ENCODE measurements at regions of chrX and their contacts with region 1.

Region 1: DNA sequence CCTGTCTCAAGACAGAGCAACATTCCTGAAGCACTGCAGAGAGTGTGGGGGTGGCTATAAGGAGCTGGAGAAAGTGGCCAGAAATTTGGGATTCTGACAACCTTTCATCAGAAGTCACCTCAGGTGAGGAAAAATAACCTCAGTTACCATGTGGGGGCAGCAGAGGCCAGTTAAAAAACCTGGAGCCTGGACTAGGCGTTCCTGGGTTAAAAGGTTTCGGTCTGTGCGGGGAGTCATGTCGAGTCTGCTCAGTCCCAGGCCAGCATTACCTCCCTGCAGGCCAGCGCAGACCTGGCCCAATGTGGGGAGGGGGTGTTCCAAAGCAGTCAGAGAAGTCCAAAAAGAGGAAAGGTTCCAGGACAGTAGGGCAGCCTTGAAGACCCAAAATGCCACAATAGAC is 10.9 kb upstream of the NALF2 start:
- DNase-seq: peak; percentile 71
- H3K4me3 Mint-ChIP-seq: no peak overlapping the region
- H3K27ac Mint-ChIP-seq: no peak overlapping the region
- H3K4me1 Mint-ChIP-seq: peaks cover 7% of the 10 kb centered on the region
- H3K27me3 Mint-ChIP-seq: peaks cover 66% of the 10 kb centered on the region
- CTCF ChIP-seq: peak; percentile 69

Region 2: GRCh38 chrX:69538321-69538876 is 45.2 kb after region 1 on chrX:
- CTCF ChIA-PET with region 1: interaction called, 10 read pairs
- POLR2A ChIA-PET with region 1: no interaction called
- intact Hi-C with region 1: loop called (anchors 1 kb)
- DNase-seq: peak; percentile 63
- H3K4me3 Mint-ChIP-seq: peak overlapping the region; percentile 56
- H3K27ac Mint-ChIP-seq: peak overlapping the region; percentile 36
- H3K4me1 Mint-ChIP-seq: no peaks in the 10 kb centered on the region
- H3K27me3 Mint-ChIP-seq: peaks cover 31% of the 10 kb centered on the region
- CTCF ChIP-seq: peak; percentile 79

Region 3: DNA sequence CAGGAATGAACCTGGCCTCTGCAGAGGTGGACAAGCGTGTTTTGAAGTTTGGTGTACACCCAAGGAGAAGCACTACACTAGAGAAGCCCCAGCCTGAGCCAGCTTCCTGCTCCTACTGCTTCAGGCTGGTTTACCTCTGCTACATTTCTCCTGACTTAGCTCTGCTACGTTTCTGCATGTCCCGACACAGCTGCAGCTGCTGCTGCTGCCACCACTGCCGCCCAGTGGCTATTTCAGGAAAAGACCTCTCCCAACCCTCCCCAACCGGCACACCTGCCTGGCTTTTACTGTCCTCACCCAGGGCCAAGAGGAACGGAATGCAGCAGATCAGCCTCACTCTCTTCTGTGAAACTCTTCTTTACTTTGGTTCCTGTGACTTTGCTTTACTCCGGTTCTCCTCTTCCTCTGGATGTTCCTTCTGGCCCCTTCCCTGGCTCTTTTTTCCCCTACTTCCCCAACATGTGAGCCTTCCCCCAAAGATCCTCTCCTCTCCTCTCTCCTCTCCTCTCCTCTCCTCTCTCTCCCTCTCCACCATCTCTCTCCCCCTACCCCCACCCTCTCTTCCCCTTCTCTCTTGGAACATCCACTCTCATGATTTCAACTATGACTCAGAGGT is 769.9 kb after region 1 on chrX:
- CTCF ChIA-PET with region 1: interaction called, 3 read pairs
- POLR2A ChIA-PET with region 1: no interaction called
- intact Hi-C with region 1: loop called (anchors 10 kb)
- DNase-seq: peak; percentile 49
- H3K4me3 Mint-ChIP-seq: no peak overlapping the region
- H3K27ac Mint-ChIP-seq: no peak overlapping the region
- H3K4me1 Mint-ChIP-seq: no peaks in the 10 kb centered on the region
- H3K27me3 Mint-ChIP-seq: peaks cover 13% of the 10 kb centered on the region
- CTCF ChIP-seq: peak; percentile 61

Measured in MCF 10A (cell line).